B cell (primary cell): ENCODE measurements at regions of chr2 and their contacts with region 1.

Region 1: DNA sequence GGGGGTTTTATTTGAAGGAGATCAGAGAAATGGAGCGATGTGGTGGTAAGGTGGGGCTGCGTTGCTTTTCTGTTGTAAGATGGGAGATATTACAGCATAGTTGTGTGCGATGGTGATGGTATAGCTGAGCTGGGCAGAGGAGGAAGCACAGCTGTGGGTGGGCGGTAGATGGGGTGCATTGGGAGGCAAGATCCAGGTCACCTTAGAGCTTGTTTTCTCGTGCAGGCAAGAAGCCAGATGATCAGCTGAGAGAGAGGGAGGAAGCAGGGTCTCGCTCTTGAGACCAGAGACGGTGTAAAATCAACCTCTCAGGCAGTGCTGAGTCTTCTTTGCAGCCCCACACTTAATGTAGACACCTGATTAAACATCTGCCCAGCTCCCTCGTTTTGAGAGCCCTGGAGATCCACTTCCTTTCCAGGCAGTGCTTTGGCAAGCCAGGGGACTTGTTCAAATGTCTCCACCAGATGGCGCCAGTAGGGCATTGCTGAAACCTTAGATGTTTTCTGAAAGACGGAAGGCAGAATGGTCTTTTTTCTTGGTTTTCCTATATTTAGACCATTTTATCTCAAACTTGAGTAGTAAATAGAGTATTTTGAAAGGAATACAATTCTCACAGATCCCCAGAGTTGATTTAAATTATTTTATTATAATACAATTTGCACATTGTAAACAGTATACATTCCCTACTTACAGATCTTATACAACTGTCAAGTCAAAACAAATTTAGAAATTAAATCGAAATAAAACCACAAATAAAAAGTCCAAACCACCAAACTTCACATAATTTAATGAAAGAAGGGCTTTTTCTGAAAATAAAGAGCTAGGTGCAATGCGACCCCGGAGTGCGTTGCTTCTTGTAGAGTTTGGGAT is 21.1 kb upstream of the LYPD6B start:
- DNase-seq: peak; percentile 79
- ATAC-seq: peak; percentile 36
- H3K4me3 ChIP-seq: no peak overlapping the region
- H3K4me3 Mint-ChIP-seq: no peak overlapping the region
- H3K27ac ChIP-seq: no peak overlapping the region
- H3K27ac Mint-ChIP-seq: no peak overlapping the region
- H3K4me1 ChIP-seq: peaks cover 29 to 46% of the 10 kb centered on the region in 2 donors
- H3K4me1 Mint-ChIP-seq: peaks cover 43% of the 10 kb centered on the region
- H3K27me3 ChIP-seq: no peaks in the 10 kb centered on the region
- H3K27me3 Mint-ChIP-seq: peaks cover 4% of the 10 kb centered on the region
- CTCF ChIP-seq: peak; percentile 91

Region 2: DNA sequence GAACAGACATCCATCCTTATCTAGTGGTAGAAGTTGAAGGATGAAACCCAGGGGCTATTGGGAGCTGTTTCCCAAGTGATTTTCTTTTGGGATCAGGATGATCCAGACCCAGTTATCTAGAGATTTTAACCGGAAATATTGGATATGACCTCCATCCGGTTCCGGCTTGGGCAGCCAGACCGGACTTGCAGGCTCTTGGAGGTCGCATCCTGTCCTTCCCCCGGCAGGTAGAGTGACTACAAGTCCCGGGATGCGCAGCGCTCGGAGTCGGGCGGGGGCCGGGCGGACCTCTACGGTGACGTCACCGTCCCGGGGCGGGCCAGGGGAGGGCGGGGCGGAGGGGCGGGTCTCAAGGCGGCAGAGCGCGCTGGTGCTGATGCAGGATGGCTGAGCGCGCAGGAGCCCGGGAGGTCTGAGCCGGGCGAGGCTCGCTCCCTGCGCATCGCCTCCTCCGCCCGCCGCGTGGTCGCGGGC is 142.4 kb before region 1 on chr2 and contains the start of gene KIF5C:
- CTCF ChIA-PET with region 1: no interaction called
- POLR2A ChIA-PET with region 1: no interaction called
- intact Hi-C with region 1: loop called (anchors 10 kb)
- DNase-seq: peak; percentile 88
- ATAC-seq: peak; percentile 92
- H3K4me3 ChIP-seq: peak within 1 kb of the TSS in 4 of 5 experiments; percentile 37 to 67 (median 58)
- H3K4me3 Mint-ChIP-seq: peak within 1 kb of the TSS; percentile 86
- H3K27ac ChIP-seq: no peak within 1 kb of the TSS
- H3K27ac Mint-ChIP-seq: peak within 1 kb of the TSS; percentile 32
- H3K4me1 ChIP-seq: peaks cover 18 to 24% of the 10 kb centered on the region in 2 donors
- H3K4me1 Mint-ChIP-seq: peaks cover 16% of the 10 kb centered on the region
- H3K27me3 ChIP-seq: peaks cover 0 to 38% (median 14%) of the 10 kb centered on the region in 4 experiments
- H3K27me3 Mint-ChIP-seq: peaks cover 43% of the 10 kb centered on the region
- CTCF ChIP-seq: no peak
- total RNA-seq, gene KIF5C: 6.0 and 6.1 TPM in 2 replicates

Region 3: GRCh38 chr2:149033716-149034115 is 16.4 kb after region 1 on chr2:
- CTCF ChIA-PET with region 1: interaction called, 54 read pairs
- POLR2A ChIA-PET with region 1: no interaction called
- intact Hi-C with region 1: loop called (anchors 1 kb)
- DNase-seq: no peak
- ATAC-seq: no peak
- H3K4me3 ChIP-seq: no peak overlapping the region
- H3K4me3 Mint-ChIP-seq: no peak overlapping the region
- H3K27ac ChIP-seq: no peak overlapping the region
- H3K27ac Mint-ChIP-seq: no peak overlapping the region
- H3K4me1 ChIP-seq: peaks cover 6 to 23% of the 10 kb centered on the region in 2 donors
- H3K4me1 Mint-ChIP-seq: peaks cover 17% of the 10 kb centered on the region
- H3K27me3 ChIP-seq: peaks cover 0 to 10% (median 4%) of the 10 kb centered on the region in 4 experiments
- H3K27me3 Mint-ChIP-seq: no peaks in the 10 kb centered on the region
- CTCF ChIP-seq: no peak

Region 4: DNA sequence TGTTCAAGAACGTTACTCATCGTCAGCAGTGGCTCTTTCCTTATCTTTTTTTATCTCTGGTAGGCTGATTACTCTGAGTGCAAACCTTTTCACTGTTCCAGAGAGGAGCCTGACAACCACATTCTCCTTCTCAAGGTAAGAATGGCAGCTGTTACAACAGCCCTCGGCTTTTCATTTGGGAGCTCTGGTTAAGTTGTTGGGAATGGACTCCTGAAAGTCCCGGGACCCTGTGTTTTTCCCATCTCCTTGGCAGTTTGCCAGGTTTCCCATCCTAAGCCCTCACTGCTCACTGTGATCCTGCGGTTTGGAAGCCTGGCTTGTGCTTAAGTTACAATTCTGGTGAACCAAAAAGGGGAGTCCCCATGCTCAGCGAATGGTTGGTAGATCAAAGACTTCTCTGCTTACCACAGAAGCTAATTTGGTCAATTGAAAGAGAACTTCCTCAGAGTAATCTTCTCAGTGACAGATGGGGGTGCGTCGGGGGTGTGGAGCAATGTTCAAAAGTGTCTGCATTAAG is 143.4 kb after region 1 on chr2:
- CTCF ChIA-PET with region 1: no interaction called
- POLR2A ChIA-PET with region 1: no interaction called
- intact Hi-C with region 1: loop called (anchors 5 kb)
- DNase-seq: peak; percentile 56
- ATAC-seq: peak; percentile 63
- H3K4me3 ChIP-seq: no peak overlapping the region
- H3K4me3 Mint-ChIP-seq: peak overlapping the region; percentile 57
- H3K27ac ChIP-seq: no peak overlapping the region
- H3K27ac Mint-ChIP-seq: no peak overlapping the region
- H3K4me1 ChIP-seq: peaks cover 14 to 15% of the 10 kb centered on the region in 2 donors
- H3K4me1 Mint-ChIP-seq: peaks cover 16% of the 10 kb centered on the region
- H3K27me3 ChIP-seq: peaks cover 0 to 35% (median 18%) of the 10 kb centered on the region in 4 experiments
- H3K27me3 Mint-ChIP-seq: peaks cover 72% of the 10 kb centered on the region
- CTCF ChIP-seq: no peak

Region 5: DNA sequence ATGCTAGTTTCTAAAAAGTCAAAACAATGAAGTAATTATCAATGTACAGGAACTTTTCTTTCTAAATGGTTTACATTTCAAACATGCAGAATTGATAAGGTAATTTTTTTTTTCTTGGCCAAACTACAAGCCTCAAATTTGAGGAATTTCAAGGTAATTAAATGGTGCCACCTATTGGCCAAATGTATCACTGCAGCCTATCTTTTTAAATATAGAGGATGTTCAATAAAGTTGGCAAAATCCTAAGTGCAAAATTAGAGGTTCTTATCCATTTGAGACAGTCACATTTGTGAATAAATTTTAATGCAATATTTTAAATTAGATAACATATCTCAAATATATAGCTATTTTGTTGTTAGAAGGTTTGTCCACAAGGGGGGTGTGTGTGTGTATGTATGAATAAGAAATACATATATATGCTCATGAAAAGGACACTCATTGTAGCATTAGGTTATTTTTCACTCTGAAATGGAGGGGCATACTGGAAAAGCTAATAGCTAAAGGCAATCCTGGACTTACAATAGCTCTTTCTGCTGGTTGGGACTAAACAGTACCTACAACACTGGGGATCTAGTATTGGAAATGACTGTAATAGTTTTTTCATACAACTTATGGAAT is 544.1 kb after region 1 on chr2:
- CTCF ChIA-PET with region 1: interaction called, 173 read pairs
- POLR2A ChIA-PET with region 1: no interaction called
- intact Hi-C with region 1: loop called (anchors 1 kb)
- DNase-seq: peak; percentile 61
- ATAC-seq: no peak
- H3K4me3 ChIP-seq: no peak overlapping the region
- H3K4me3 Mint-ChIP-seq: no peak overlapping the region
- H3K27ac ChIP-seq: no peak overlapping the region
- H3K27ac Mint-ChIP-seq: no peak overlapping the region
- H3K4me1 ChIP-seq: peaks cover 0 to 9% of the 10 kb centered on the region in 2 donors
- H3K4me1 Mint-ChIP-seq: peaks cover 10% of the 10 kb centered on the region
- H3K27me3 ChIP-seq: no peaks in the 10 kb centered on the region
- H3K27me3 Mint-ChIP-seq: peaks cover 7% of the 10 kb centered on the region
- CTCF ChIP-seq: peak; percentile 98